ENCODE measurements at regions of chr2 and their contacts with region 1.

Region 1: DNA sequence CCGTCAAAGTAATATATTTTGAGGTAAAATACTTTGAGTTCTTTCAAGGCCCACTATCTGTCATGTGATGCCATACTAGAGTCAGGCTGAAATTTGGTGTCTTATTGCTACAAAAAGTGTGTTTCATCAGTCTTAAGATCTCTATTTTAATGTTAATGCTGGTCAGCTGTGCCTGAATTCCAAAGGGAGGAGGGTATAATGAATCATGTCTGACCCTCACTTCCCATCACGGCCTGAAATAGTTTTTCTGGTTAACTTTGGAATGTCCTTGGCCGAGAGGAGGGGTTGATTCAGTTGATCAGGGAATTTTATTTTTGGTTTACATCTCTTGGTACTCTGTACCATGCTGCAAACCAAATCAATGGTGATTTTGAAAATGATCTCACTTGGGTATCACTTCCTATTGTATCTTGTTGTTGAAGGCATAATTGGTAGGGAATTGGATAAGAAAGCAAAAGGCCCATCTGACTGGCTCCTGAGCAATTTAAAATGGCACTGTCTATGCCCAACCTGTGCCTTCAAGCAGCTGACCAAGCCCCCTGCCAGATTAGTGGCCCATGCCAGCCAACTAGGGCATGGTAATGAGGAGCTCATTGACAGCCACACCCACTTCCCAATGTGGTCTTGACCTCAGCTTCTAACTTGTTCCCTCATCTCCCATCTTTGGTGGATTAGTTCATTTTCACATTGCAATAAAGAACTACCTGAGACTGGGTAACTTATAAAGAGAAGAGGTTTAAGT is 6.1 kb upstream of the SLC35F5 start:
- DNase-seq: peak; percentile 19
- H3K4me3 ChIP-seq: no peak overlapping the region
- H3K27ac ChIP-seq: no peak overlapping the region
- H3K4me1 ChIP-seq: peaks cover 3% of the 10 kb centered on the region
- H3K27me3 ChIP-seq: no peaks in the 10 kb centered on the region
- CTCF ChIP-seq: no peak

Region 2: GRCh38 chr2:113876503-113877387 is 114.2 kb after region 1 on chr2:
- CTCF ChIA-PET with region 1: no interaction called
- dilution Hi-C with region 1: loop called (anchors 5 kb)
- in situ Hi-C with region 1: no loop called
- intact Hi-C with region 1: no loop called
- DNase-seq: peak; percentile 88
- H3K4me3 ChIP-seq: no peak overlapping the region
- H3K27ac ChIP-seq: no peak overlapping the region
- H3K4me1 ChIP-seq: peaks cover 31% of the 10 kb centered on the region
- H3K27me3 ChIP-seq: no peaks in the 10 kb centered on the region
- CTCF ChIP-seq: no peak